IMR-90 (cell line): ENCODE measurements at regions of chr9 and their contacts with region 1.

Region 1: DNA sequence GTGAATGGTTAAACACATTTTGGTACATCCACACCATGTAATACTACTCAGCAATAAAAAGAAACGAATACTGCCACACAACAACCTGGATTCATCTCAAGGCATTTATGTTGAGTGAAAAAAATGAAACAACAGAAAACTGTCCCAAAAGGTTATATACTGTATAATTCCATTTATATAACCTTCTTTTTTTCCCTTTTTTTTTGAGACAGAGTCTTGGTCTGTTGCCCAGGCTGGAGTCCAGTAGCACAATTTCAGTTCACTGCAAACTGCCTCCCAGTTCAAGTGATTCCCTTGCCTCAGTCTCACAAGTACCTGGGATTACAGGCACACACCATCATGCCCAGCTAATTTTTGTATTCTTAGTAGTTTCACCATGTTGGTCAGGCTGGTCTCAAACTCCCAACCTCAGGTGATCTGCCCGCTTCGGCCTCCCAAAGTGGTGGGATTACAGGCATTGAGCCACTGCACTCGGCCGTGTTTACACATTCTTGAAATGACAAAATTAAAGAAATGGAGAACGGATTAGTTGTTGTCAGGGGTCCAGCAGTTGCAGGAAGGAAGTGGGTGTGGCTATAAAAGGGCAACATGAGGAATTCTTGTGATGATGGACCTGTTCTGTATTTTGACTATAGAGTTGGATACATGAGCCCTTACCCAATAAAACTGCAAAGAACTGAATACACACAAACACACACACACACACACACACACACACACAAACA is 17.4 kb downstream of the PPP6C start:
- DNase-seq: no peak
- ATAC-seq: peak; percentile 9; the same call in 1 of the 2 replicates
- H3K4me3 ChIP-seq: no peak overlapping the region
- H3K27ac ChIP-seq: no peak overlapping the region; the same call in 1 of the 2 replicates
- H3K4me1 ChIP-seq: peaks cover 14% of the 10 kb centered on the region
- H3K27me3 ChIP-seq: no peaks in the 10 kb centered on the region
- CTCF ChIP-seq: no peak
- POLR2A ChIP-seq: no peak
- RAD21 ChIP-seq: no peak

Region 2: GRCh38 chr9:125233678-125234077 is 61.5 kb after region 1 on chr9:
- CTCF ChIA-PET with region 1: no interaction called
- POLR2A ChIA-PET with region 1: interaction called, 12 read pairs
- dilution Hi-C with region 1: no loop called
- in situ Hi-C with region 1: no loop called
- intact Hi-C with region 1: no loop called
- DNase-seq: peak; percentile 100
- ATAC-seq: peak; percentile 96
- H3K4me3 ChIP-seq: no peak overlapping the region
- H3K27ac ChIP-seq: no peak overlapping the region
- H3K4me1 ChIP-seq: peaks cover 4% of the 10 kb centered on the region; the same call in 1 of the 2 replicates
- H3K27me3 ChIP-seq: no peaks in the 10 kb centered on the region
- CTCF ChIP-seq: no peak
- POLR2A ChIP-seq: no peak; the same call in 1 of the 2 replicates
- RAD21 ChIP-seq: peak; percentile 13; the same call in 1 of the 2 replicates